A673 (cell line): ENCODE measurements at regions of chr6 and their contacts with region 1.

Region 1: DNA sequence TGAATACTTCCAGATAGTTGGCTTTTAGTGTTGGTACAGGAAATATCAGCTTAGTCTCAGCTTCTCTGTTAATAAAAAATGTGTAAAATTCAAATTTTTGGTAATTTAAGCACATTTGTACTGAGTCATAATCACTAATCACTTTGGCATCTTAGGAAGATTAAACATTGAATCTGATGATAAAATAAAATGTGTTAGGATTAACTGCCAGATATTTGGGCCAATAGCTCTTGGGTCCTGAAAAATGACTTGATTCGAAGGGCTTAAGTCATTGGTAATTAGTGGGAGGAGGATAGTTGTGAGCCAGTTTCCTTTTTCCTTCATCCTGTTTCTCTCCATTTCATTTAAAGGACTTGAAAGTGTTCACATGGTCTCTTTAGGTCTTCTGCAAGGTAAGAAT is 426.1 kb downstream of the RFPL4B start:
- DNase-seq: peak; percentile 49
- H3K4me3 ChIP-seq: no peak overlapping the region
- H3K27ac ChIP-seq: no peak overlapping the region
- H3K4me1 ChIP-seq: no peaks in the 10 kb centered on the region
- H3K27me3 ChIP-seq: no peaks in the 10 kb centered on the region
- CTCF ChIP-seq: no peak

Region 2: DNA sequence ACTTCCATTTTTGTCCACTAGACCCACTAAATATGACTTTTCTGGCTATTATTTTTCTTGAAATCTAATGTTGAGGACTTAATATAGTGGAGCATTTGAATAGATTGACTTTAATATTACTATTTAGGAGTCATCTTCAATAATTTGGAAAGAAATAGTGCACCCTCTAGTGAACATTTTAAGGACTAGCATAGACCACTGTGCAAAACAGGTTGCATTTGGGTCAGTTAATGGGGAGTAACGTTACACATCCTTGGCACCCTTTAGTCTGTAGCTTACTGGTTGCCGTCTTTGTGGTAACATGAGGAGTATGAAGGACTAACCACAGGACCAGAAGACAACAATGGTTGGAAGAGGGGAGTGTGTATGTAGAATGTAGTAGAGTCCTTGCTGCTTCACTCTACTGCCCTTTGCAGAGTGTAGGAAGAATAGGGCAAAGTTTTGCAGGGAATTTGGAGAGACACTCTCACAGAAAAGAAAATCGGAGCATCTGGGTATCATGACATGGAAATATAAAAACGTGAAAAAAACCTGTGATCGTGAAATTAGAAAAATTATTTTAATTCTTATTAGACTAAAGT is 400.9 kb before region 1 on chr6:
- CTCF ChIA-PET with region 1: no interaction called
- POLR2A ChIA-PET with region 1: no interaction called
- intact Hi-C with region 1: no loop called
- DNase-seq: peak; percentile 53
- H3K4me3 ChIP-seq: no peak overlapping the region
- H3K27ac ChIP-seq: no peak overlapping the region
- H3K4me1 ChIP-seq: no peaks in the 10 kb centered on the region
- H3K27me3 ChIP-seq: peaks cover 12% of the 10 kb centered on the region
- CTCF ChIP-seq: peak; percentile 67

Region 3: GRCh38 chr6:112502351-112503090 is 270.7 kb before region 1 on chr6:
- CTCF ChIA-PET with region 1: no interaction called
- POLR2A ChIA-PET with region 1: no interaction called
- intact Hi-C with region 1: loop called (anchors 2 kb)
- DNase-seq: peak; percentile 40
- H3K4me3 ChIP-seq: no peak overlapping the region
- H3K27ac ChIP-seq: no peak overlapping the region
- H3K4me1 ChIP-seq: peaks cover 21% of the 10 kb centered on the region
- H3K27me3 ChIP-seq: no peaks in the 10 kb centered on the region
- CTCF ChIP-seq: peak; percentile 49; the same call in 1 of the 2 replicates

Region 4: GRCh38 chr6:112786801-112787200 is 13.6 kb after region 1 on chr6:
- CTCF ChIA-PET with region 1: no interaction called
- POLR2A ChIA-PET with region 1: no interaction called
- intact Hi-C with region 1: no loop called
- DNase-seq: no peak
- H3K4me3 ChIP-seq: no peak overlapping the region
- H3K27ac ChIP-seq: no peak overlapping the region
- H3K4me1 ChIP-seq: no peaks in the 10 kb centered on the region
- H3K27me3 ChIP-seq: no peaks in the 10 kb centered on the region
- CTCF ChIP-seq: no peak